ENCODE measurements at regions of chr15 and their contacts with region 1.

Region 1: DNA sequence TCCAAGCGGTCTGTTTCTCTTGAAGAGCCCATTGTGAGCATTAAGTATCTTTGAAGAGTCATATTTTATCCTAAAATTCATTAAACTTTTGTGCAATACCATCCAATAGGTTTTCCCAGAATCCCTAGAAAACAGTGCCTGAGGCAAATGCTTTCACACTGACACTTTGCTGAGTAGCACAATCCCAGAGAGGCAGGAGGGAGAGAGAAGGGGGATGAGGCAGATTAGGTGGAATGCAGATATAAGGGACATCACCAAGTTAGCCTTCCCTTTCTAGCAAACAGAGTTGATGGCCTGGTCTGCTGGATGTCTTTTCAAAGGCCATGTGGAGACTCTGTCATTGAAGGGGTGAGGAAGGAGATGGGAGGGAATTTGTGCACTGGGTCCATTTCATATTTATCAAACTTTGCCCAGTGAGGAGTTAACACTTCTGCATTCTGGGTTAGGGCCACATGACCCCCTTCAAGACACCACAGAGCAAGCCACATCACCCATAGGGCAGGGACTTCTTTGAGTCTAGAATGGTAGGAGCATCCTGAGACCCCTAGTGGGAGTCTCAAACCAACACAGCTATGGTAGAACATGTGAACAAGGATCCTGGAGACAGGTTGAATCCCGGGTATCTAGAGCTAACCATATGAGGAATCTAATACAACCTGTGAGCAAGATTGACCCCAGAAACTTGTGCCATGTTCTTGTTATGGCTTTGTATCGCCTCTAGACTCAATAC is 32.0 kb upstream of the SEMA6D start:
- DNase-seq: no peak
- ATAC-seq: no peak
- H3K4me3 ChIP-seq: no peak overlapping the region
- H3K27ac ChIP-seq: no peak overlapping the region
- H3K4me1 ChIP-seq: no peaks in the 10 kb centered on the region
- H3K27me3 ChIP-seq: no peaks in the 10 kb centered on the region

Region 2: GRCh38 chr15:47652328-47652727 is 33.0 kb before region 1 on chr15:
- intact Hi-C with region 1: loop called in 1 of 2 experiments (anchors 1 kb)
- DNase-seq: no peak
- ATAC-seq: no peak
- H3K4me3 ChIP-seq: no peak overlapping the region
- H3K27ac ChIP-seq: no peak overlapping the region
- H3K4me1 ChIP-seq: no peaks in the 10 kb centered on the region
- H3K27me3 ChIP-seq: no peaks in the 10 kb centered on the region